Endothelial cell of umbilical vein (primary cell): ENCODE measurements at regions of chr6 and their contacts with region 1.

Region 1: DNA sequence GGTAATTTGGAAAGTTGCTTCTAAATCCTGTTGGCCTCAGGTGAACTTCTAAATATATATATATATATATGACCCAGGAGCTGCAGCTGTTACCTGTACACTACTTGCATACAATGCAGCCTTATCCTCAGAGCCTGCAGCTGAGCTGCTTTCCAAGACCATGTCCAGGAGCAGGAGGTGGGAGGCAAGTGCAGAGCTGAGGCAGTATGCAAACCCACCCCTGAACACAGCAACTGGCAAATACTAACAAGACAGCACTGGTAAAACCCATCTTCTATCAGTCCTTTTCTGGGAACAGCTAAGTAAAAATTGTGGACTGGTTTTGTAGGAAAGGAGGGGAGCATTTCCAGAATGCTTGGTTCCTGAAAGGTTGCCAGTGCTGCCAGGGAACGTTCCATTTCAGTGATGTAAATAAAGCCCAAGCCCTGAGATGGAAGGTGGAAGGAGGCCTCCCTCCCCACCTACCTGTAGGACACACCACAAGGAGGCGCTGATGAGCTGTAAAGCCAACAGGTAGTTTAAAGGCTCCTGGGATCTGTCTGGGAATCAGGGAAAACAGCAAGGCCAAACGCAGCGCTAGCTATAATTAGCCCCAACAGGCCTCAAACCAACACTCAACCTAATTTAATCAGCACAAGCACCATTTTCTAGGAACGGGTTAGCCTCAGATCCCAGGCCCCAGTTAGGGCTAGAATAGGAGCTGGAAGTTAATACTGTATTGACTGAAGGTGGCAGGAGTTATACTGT is 93.8 kb upstream of the MAP7 start:
- DNase-seq: peak; percentile 88
- H3K4me3 ChIP-seq: no peak overlapping the region
- H3K27ac ChIP-seq: no peak overlapping the region
- H3K4me1 ChIP-seq: peaks cover 12% of the 10 kb centered on the region
- H3K27me3 ChIP-seq: no peaks in the 10 kb centered on the region
- CTCF ChIP-seq: peak; percentile 85 to 88
- POLR2A ChIP-seq: no peak

Region 2: DNA sequence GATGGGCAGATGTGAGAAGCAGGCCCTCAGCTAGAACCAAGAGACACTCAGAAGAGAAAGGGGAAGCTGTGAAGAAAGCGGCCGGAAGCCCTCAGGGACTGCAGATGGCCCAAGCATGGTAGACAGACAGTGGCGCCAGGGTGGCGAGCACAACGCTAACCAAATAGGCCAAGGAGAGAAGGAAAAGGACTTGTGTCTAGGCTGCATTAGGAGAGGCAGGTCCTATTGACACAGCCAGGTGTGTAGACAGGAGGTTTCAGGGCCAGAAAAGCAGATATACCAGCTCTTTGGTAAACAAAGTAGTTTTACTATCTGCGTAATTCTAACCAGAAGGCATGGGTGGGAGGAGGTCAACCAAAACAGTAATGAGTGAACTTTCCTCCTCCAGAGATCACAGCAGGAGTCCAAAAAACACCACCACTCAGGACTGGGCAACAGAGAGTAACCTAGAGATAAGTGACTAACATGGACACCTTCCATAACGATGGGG is 78.0 kb before region 1 on chr6:
- CTCF ChIA-PET with region 1: no interaction called
- POLR2A ChIA-PET with region 1: no interaction called
- dilution Hi-C with region 1: no loop called
- intact Hi-C with region 1: no loop called
- DNase-seq: no peak
- H3K4me3 ChIP-seq: no peak overlapping the region
- H3K27ac ChIP-seq: no peak overlapping the region
- H3K4me1 ChIP-seq: peaks cover 5% of the 10 kb centered on the region
- H3K27me3 ChIP-seq: no peaks in the 10 kb centered on the region
- CTCF ChIP-seq: no peak
- POLR2A ChIP-seq: no peak

Region 3: GRCh38 chr6:136582711-136583471 is 61.1 kb before region 1 on chr6:
- CTCF ChIA-PET with region 1: interaction called, 24 read pairs
- POLR2A ChIA-PET with region 1: no interaction called
- dilution Hi-C with region 1: no loop called
- intact Hi-C with region 1: loop called (anchors 1 kb)
- DNase-seq: peak; percentile 77
- H3K4me3 ChIP-seq: no peak overlapping the region
- H3K27ac ChIP-seq: peak overlapping the region; percentile 89
- H3K4me1 ChIP-seq: peaks cover 4% of the 10 kb centered on the region
- H3K27me3 ChIP-seq: no peaks in the 10 kb centered on the region
- CTCF ChIP-seq: peak; percentile 26 to 31
- POLR2A ChIP-seq: no peak

Region 4: GRCh38 chr6:136607932-136608772 is 35.9 kb before region 1 on chr6:
- CTCF ChIA-PET with region 1: interaction called, 19 read pairs
- POLR2A ChIA-PET with region 1: no interaction called
- dilution Hi-C with region 1: no loop called
- intact Hi-C with region 1: loop called (anchors 1 kb)
- DNase-seq: peak; percentile 61
- H3K4me3 ChIP-seq: no peak overlapping the region
- H3K27ac ChIP-seq: no peak overlapping the region
- H3K4me1 ChIP-seq: peaks cover 43% of the 10 kb centered on the region
- H3K27me3 ChIP-seq: no peaks in the 10 kb centered on the region
- CTCF ChIP-seq: peak; percentile 83 to 85
- POLR2A ChIP-seq: no peak

Region 5: DNA sequence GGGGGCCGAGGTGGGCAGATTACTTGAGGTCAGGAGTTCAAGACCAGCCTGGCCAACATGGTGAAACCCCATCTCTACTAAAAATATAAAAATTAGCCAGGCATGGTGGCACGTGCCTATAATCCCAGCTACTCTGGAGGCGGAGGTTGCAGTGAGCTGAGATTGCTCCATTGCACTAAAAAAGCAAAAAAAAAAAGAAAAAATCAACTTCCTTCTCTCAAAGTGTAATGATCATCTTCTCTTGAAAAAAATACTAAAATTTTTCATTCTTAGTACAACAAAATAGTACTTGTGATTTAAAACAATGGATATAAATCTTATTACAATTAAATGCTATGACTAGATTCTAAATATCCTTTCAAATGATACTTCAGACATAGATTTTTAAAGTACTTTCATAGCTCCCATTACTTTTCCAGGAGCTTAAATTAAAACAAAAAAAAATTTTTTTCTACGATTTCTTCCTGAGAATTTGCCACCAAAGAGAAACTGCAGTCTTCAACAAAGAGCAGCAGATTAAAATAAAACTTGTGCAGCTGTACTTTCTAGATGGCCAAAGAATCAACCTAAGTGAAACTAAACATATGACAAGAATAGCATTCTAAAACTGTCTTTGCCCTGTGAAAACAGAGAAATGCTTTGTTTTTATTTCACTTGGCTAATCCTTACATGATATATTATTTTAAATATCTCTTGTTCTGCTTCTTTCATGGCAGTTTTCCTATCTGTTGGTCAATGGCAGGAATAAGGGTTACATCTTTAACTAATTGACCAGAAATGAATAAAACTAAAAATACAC is 73.1 kb after region 1 on chr6:
- CTCF ChIA-PET with region 1: interaction called, 35 read pairs
- POLR2A ChIA-PET with region 1: no interaction called
- dilution Hi-C with region 1: no loop called
- intact Hi-C with region 1: loop called (anchors 1 kb)
- DNase-seq: no peak
- H3K4me3 ChIP-seq: peak overlapping the region in 2 of 3 experiments; percentile 9 to 36
- H3K27ac ChIP-seq: peak overlapping the region; percentile 45
- H3K4me1 ChIP-seq: peaks cover 28% of the 10 kb centered on the region
- H3K27me3 ChIP-seq: no peaks in the 10 kb centered on the region
- CTCF ChIP-seq: no peak
- POLR2A ChIP-seq: no peak

Region 6: GRCh38 chr6:136798031-136798430 is 154.0 kb after region 1 on chr6:
- CTCF ChIA-PET with region 1: interaction called, 708 read pairs
- POLR2A ChIA-PET with region 1: interaction called, 3 read pairs
- dilution Hi-C with region 1: no loop called
- intact Hi-C with region 1: loop called (anchors 1 kb)
- DNase-seq: no peak
- H3K4me3 ChIP-seq: no peak overlapping the region
- H3K27ac ChIP-seq: no peak overlapping the region
- H3K4me1 ChIP-seq: peaks cover 2% of the 10 kb centered on the region
- H3K27me3 ChIP-seq: no peaks in the 10 kb centered on the region
- CTCF ChIP-seq: no peak
- POLR2A ChIP-seq: no peak

Region 7: DNA sequence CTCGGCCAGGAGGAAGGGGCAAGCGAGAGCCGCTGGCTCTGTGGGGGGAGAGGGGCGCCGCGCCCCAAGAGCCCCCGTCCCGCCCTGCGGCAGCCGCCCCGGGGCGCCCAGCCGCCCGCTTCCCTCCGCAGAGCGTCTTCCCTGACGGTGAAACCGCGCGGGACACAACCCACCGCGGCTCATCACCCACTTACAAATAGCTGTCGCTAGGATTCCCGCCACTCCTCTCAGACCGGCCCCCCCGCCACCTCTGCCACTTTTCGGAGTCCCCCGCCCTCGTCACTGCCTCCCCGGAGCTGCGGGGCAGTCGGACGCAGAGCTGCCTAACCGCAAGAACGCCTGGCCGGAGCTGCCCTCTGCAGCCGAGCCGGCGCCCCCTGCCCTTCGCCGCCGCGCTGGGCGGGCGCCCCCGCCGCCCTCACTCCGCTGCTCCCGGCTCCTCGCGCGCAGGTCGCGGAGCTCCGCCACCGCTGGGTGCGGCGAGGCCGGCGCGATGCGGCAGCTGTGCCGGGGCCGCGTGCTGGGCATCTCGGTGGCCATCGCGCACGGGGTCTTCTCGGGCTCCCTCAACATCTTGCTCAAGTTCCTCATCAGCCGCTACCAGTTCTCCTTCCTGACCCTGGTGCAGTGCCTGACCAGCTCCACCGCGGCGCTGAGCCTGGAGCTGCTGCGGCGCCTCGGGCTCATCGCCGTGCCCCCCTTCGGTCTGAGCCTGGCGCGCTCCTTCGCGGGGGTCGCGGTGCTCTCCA is 278.1 kb after region 1 on chr6 and contains the start of gene SLC35D3:
- CTCF ChIA-PET with region 1: interaction called, 13 read pairs
- POLR2A ChIA-PET with region 1: no interaction called
- dilution Hi-C with region 1: no loop called
- intact Hi-C with region 1: loop called (anchors 1 kb)
- DNase-seq: peak; percentile 14
- H3K4me3 ChIP-seq: peak within 1 kb of the TSS; percentile 33 to 50 (median 43)
- H3K27ac ChIP-seq: no peak within 1 kb of the TSS
- H3K4me1 ChIP-seq: peaks cover 23% of the 10 kb centered on the region
- H3K27me3 ChIP-seq: peaks cover 32 to 53% of the 10 kb centered on the region in 2 experiments
- CTCF ChIP-seq: no peak
- POLR2A ChIP-seq: no peak
- total RNA-seq, gene SLC35D3: not detected in 2 replicates

Region 8: GRCh38 chr6:137641474-137642077 is 997.6 kb after region 1 on chr6:
- CTCF ChIA-PET with region 1: interaction called, 12 read pairs
- POLR2A ChIA-PET with region 1: no interaction called
- dilution Hi-C with region 1: no loop called
- intact Hi-C with region 1: no loop called
- DNase-seq: peak; percentile 70
- H3K4me3 ChIP-seq: no peak overlapping the region
- H3K27ac ChIP-seq: no peak overlapping the region
- H3K4me1 ChIP-seq: no peaks in the 10 kb centered on the region
- H3K27me3 ChIP-seq: peaks cover 0 to 3% of the 10 kb centered on the region in 2 experiments
- CTCF ChIP-seq: peak; percentile 55 to 58
- POLR2A ChIP-seq: no peak